ENCODE measurements at regions of chr1 and their contacts with region 1.

Region 1: DNA sequence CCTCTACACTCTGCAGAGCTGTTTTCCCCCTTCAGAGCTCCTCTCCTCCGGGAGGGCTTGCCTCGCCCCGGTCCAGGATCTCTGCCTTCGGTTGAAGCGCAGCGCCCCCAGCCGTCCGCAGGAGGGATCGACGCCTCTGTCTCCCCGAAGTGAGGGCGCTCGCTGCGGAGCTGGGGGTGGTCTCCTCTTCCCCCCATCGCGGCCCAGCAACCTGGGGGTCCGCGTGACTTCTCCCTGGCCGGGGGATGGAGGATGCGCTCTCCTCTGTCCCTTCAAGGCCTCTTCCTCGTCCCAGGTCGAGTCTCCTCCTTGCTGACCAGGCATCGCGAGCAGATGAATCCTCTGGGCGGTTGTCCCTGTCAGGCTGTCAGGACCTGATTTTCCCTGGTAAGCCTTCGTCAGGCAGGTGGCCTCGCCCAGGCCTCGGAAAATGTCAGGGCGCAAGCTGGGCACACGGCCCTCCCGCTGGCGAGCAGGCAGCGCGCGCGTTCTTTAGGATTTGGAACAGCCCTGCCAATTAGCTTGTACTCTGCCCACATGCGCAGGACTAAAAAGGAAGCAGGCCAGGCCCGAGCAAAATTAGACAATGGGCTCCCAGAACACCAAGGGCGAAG is 90.5 kb downstream of the EDEM3 start:
- DNase-seq: peak; percentile 75 to 86
- ATAC-seq: peak; percentile 92 to 96 (median 95)
- H3K4me3 ChIP-seq: peak overlapping the region in 9 of 10 donors; percentile 23 to 59 (median 45)
- H3K27ac ChIP-seq: peak overlapping the region in 4 of 10 donors; percentile 26 to 54 (median 38)
- H3K4me1 ChIP-seq: peaks cover 0 to 14% (median 13%) of the 10 kb centered on the region in 9 donors
- H3K27me3 ChIP-seq: no peaks in the 10 kb centered on the region
- CTCF ChIP-seq: peak; percentile 85 to 99 (median 95)

Region 2: DNA sequence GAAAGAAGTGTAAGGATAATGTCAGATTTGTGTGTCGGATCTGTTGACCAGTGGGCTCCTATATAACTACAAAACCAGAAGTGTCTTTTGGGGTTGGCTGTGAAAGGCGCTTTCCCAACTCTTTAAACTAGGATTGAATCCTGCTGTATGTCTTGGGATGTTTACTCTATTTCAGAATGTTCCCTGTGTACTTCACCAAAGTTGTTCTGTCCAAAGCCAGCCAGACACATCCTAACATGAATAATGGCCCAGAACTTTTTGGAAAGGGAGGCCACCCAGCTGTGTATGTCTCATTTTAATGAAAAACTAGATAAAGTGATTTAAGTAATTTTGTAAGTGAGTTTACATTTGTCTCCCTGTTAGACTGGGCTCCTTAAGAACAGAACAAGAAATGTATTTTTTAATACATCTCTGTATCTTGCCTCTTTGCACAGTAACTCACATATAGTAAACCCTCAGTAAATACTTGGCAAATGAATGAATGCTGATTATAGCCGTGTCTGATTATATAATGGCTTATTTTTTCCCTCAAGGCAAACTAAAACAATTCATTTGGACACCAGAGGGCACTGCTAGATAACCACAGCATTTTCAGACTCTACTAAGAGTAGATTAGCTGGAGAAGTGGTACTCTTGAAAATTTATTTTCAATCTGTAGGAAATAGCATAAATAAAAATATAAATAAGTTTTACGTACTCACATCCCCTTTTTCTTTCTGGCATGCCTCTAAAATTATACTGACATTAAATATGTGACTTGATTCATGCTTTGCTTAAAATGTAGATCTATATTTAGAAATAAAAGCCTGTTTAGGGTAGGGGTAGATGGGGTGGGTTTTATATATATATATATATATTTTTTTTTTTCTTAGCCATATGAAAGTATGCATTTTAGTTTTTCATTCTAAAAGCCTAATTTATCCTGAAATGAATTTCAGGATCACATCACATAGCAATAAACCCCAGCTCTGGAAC is 588.8 kb before region 1 on chr1:
- intact Hi-C with region 1: loop called in 9 of 10 experiments (anchors 1 to 10 kb)
- DNase-seq: peak in 1 of 2 donors; percentile 67
- ATAC-seq: peak; percentile 65 to 91 (median 84)
- H3K4me3 ChIP-seq: no peak overlapping the region
- H3K27ac ChIP-seq: peak overlapping the region in 7 of 10 donors; percentile 2 to 69 (median 46)
- H3K4me1 ChIP-seq: peaks cover 0 to 29% (median 9%) of the 10 kb centered on the region in 9 donors
- H3K27me3 ChIP-seq: no peaks in the 10 kb centered on the region
- CTCF ChIP-seq: peak; percentile 55 to 91 (median 79)

Region 3: GRCh38 chr1:184296466-184297243 is 367.5 kb before region 1 on chr1:
- intact Hi-C with region 1: loop called in 1 of 10 experiments (anchors 5 kb)
- DNase-seq: peak; percentile 75 to 97
- ATAC-seq: peak; percentile 91 to 95 (median 94)
- H3K4me3 ChIP-seq: peak overlapping the region in 5 of 10 donors; percentile 6 to 26 (median 18)
- H3K27ac ChIP-seq: peak overlapping the region; percentile 57 to 95 (median 82)
- H3K4me1 ChIP-seq: peaks cover 16 to 74% (median 41%) of the 10 kb centered on the region in 9 donors
- H3K27me3 ChIP-seq: no peaks in the 10 kb centered on the region
- CTCF ChIP-seq: no peak

Region 4: DNA sequence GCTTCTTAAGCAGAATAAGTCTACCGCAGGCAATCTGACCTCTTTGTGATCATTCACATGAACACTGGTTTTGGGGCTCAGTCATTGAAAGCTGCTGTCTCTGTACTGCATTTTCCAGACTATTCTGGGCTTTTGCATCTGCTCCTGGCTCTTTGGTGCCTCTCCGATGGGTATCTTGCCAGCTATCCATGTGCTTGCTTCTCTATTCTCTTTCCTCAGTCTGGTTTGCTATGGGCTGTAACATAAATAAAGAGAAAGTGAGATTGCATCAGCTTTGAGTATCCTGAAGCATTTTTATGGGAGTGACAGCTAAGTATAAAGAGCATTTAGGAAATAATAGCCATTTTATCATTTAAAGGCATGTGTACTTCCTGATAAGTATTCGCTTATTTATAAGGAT is 206.6 kb before region 1 on chr1:
- intact Hi-C with region 1: loop called in 1 of 10 experiments (anchors 10 kb)
- DNase-seq: no peak
- ATAC-seq: no peak
- H3K4me3 ChIP-seq: no peak overlapping the region
- H3K27ac ChIP-seq: no peak overlapping the region
- H3K4me1 ChIP-seq: peaks cover 25 to 92% (median 61%) of the 10 kb centered on the region in 9 donors
- H3K27me3 ChIP-seq: no peaks in the 10 kb centered on the region
- CTCF ChIP-seq: no peak

Region 5: GRCh38 chr1:184574588-184574987 is 89.6 kb before region 1 on chr1:
- intact Hi-C with region 1: loop called in 6 of 10 experiments (anchors 5 to 10 kb)
- DNase-seq: no peak
- ATAC-seq: peak in 4 of 8 donors; percentile 41 to 52 (median 47)
- H3K4me3 ChIP-seq: no peak overlapping the region
- H3K27ac ChIP-seq: peak overlapping the region in 5 of 10 donors; percentile 9 to 37 (median 27)
- H3K4me1 ChIP-seq: peaks cover 0 to 27% (median 6%) of the 10 kb centered on the region in 9 donors
- H3K27me3 ChIP-seq: no peaks in the 10 kb centered on the region
- CTCF ChIP-seq: no peak

Region 6: GRCh38 chr1:184630684-184631060 is 33.5 kb before region 1 on chr1:
- intact Hi-C with region 1: loop called in 1 of 10 experiments (anchors 2 kb)
- DNase-seq: no peak
- ATAC-seq: peak in 1 of 8 donors; percentile 4
- H3K4me3 ChIP-seq: no peak overlapping the region
- H3K27ac ChIP-seq: peak overlapping the region in 9 of 10 donors; percentile 55 to 77 (median 69)
- H3K4me1 ChIP-seq: peaks cover 8 to 70% (median 41%) of the 10 kb centered on the region in 9 donors
- H3K27me3 ChIP-seq: no peaks in the 10 kb centered on the region
- CTCF ChIP-seq: no peak